MCF 10A (cell line): ENCODE measurements at regions of chr9 and their contacts with region 1.

Region 1: DNA sequence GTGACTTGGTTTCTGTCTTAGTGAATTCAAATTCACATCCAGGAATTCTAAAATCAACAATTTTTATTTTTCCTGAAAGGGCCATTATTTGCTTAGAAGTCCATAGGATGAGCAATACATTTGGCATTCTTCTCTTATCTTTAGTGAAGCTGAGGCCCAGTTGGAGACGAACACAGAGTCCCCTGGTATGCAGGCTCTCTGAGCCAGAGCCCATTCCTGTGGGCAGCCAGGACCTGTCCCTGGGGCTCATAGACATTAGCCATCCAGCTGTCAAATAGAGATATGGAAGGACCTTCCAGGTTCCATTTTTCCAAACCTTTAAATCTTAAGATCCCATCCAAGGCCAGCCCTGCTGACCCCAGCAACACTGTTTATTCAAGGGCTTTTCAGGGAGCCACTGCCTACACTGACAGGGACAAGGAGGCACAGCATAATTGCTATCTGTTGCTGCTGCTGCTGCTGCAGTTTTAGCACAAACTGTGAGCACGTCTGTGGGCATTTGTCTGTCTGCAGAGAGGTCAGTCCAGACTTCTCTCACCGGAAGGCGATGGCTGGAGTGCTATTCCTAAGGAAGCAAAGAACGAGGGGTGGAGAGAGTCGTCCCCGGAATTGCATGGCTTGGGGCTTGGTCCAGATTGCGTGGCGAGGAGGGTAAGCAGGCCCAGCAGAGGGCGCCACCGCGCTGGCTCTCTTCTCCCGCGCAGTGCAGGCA is 639.0 kb downstream of the CCDC171 start:
- DNase-seq: peak; percentile 74
- H3K4me3 Mint-ChIP-seq: peak overlapping the region; percentile 53
- H3K27ac Mint-ChIP-seq: no peak overlapping the region
- H3K4me1 Mint-ChIP-seq: peaks cover 13% of the 10 kb centered on the region
- H3K27me3 Mint-ChIP-seq: no peaks in the 10 kb centered on the region
- CTCF ChIP-seq: peak; percentile 60

Region 2: GRCh38 chr9:15873569-15874177 is 318.2 kb before region 1 on chr9:
- CTCF ChIA-PET with region 1: no interaction called
- POLR2A ChIA-PET with region 1: no interaction called
- intact Hi-C with region 1: loop called (anchors 5 kb)
- DNase-seq: peak; percentile 67
- H3K4me3 Mint-ChIP-seq: no peak overlapping the region
- H3K27ac Mint-ChIP-seq: no peak overlapping the region
- H3K4me1 Mint-ChIP-seq: peaks cover 9% of the 10 kb centered on the region
- H3K27me3 Mint-ChIP-seq: no peaks in the 10 kb centered on the region
- CTCF ChIP-seq: peak; percentile 51

Region 3: DNA sequence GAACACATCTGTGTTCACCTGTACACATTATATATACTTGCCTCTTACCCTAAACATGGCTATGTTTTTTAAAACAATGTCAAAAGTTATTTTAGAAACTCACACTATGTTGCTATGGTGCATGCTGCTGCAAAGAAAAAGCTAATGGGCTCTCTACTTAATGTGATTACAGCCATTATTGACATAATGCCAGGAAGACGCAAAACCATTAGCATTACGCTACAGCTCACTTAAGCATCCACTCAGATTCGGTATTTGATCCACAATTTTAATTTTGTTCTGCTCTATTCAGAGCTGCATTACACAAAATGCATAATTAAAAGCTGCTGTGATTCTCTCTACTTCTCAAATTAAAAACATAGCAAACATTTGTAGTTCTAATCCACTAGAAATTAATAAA is 283.4 kb after region 1 on chr9:
- CTCF ChIA-PET with region 1: no interaction called
- POLR2A ChIA-PET with region 1: no interaction called
- intact Hi-C with region 1: loop called (anchors 10 kb)
- DNase-seq: no peak
- H3K4me3 Mint-ChIP-seq: no peak overlapping the region
- H3K27ac Mint-ChIP-seq: no peak overlapping the region
- H3K4me1 Mint-ChIP-seq: no peaks in the 10 kb centered on the region
- H3K27me3 Mint-ChIP-seq: no peaks in the 10 kb centered on the region
- CTCF ChIP-seq: no peak

Region 4: GRCh38 chr9:16601991-16602390 is 410.1 kb after region 1 on chr9:
- CTCF ChIA-PET with region 1: no interaction called
- POLR2A ChIA-PET with region 1: no interaction called
- intact Hi-C with region 1: loop called (anchors 1 kb)
- DNase-seq: peak; percentile 5
- H3K4me3 Mint-ChIP-seq: no peak overlapping the region
- H3K27ac Mint-ChIP-seq: no peak overlapping the region
- H3K4me1 Mint-ChIP-seq: no peaks in the 10 kb centered on the region
- H3K27me3 Mint-ChIP-seq: no peaks in the 10 kb centered on the region
- CTCF ChIP-seq: peak; percentile 12

Region 5: DNA sequence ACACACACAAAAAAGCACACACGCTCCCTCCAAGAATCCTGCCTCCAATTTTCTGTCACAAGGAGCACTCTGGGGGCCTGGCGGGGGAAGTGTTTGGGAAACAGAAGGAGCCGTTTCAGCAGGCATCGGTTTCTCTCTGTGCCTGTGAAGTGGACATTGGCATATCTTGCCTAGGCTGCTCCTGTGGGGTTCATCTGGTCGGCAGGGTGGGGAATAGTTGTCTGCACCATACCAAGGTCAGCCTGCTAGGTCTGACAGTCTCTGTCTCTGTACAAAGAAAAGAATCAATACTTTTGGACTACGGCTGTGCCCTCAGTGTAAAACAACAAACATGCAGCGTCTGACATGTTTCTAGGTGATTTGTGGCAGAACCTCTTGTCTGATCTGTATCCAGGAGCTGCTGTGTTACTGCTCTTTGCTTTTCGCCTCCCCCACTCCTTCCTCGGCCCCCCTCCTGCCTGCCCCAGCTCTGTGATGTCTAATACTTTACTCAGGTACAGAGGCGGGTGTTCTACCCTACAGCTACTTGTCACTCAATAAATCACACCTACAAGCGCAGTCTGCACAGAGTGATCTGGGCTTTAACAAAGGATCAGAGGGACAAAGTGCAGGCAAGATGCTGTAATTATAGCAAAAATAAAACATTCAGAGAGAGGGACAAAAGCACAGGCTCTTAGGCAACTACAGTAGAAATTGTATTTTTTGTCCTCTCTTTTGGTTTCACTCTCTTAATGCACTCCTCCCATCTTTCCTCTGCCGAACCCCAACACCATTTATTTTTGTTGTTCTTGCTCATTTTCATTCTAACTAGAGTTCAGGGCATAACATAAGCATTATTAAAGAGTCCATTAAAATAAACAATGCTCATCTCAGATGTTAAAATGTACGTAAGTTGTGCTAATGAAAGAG is 461.9 kb after region 1 on chr9:
- CTCF ChIA-PET with region 1: interaction called, 5 read pairs
- POLR2A ChIA-PET with region 1: no interaction called
- intact Hi-C with region 1: loop called (anchors 1 kb)
- DNase-seq: no peak
- H3K4me3 Mint-ChIP-seq: no peak overlapping the region
- H3K27ac Mint-ChIP-seq: no peak overlapping the region
- H3K4me1 Mint-ChIP-seq: peaks cover 6% of the 10 kb centered on the region
- H3K27me3 Mint-ChIP-seq: peaks cover 23% of the 10 kb centered on the region
- CTCF ChIP-seq: no peak

Region 6: DNA sequence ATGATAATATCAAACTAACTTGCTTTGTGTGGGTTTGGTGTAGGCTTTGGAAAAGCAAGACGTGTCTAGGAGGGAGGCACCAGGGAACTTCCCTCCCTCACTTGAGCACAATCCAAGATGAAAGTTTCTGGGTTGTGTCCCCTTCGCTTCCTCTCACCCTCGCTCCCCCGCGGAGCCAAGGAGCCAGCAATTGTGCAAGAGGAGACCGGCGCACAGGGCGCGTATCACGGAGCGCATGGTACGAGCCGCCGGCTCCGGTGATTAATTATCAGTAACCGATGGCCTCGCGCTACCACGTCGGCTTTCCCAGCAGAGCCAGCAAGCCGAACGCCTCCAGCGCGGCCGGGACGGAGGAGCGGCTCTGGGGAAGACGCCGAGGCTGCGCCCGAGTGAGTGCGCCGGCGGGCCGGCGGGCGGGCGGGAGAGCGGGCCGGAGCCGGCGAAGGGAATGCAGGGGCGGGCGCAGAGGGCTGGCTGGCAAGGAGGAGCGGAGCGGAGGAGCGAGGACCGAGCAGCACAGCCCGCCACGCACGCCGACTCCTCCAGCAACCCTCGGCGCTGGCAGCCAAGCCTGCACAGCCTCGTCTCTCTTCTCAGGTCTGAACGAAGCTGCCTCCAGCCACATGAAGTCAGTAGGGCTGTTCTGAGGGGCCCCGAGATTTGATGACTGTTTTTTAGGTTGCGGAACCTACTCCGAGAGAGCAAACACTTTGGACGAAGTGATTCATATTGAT is 535.0 kb after region 1 on chr9:
- CTCF ChIA-PET with region 1: interaction called, 3 read pairs
- POLR2A ChIA-PET with region 1: no interaction called
- intact Hi-C with region 1: loop called (anchors 5 kb)
- DNase-seq: peak; percentile 85
- H3K4me3 Mint-ChIP-seq: peak overlapping the region; percentile 78
- H3K27ac Mint-ChIP-seq: no peak overlapping the region
- H3K4me1 Mint-ChIP-seq: peaks cover 5% of the 10 kb centered on the region
- H3K27me3 Mint-ChIP-seq: peaks cover 21% of the 10 kb centered on the region
- CTCF ChIP-seq: no peak

Region 7: DNA sequence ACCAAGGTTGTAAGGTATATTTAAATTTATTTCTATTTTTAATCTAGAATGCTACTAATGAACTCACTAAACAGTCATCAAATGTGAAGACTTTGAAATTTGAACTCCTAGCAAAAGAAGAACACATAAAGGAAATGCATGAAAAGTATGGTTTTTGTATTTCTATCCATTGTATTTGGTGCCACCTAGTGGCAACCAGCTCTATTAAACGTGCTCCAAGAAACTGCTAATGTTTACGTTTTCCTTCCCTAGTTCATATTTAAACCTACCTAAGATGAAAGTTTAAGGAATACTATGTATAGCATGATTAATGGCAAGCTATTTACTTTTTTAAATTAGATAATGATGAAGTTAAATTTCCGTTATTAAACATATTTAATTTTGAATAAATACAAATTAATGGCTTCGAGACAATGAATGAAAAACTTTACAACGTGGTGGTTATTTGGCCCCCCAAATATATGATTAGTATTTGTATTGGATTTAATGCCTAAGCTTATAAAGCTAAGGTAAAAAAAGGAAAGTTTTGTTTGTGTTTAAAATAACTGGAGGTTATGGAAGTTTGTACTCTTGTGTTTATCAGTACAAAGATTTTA is 1271.1 kb after region 1 on chr9:
- CTCF ChIA-PET with region 1: interaction called, 4 read pairs
- POLR2A ChIA-PET with region 1: no interaction called
- intact Hi-C with region 1: loop called (anchors 1 kb)
- DNase-seq: peak; percentile 63
- H3K4me3 Mint-ChIP-seq: no peak overlapping the region
- H3K27ac Mint-ChIP-seq: no peak overlapping the region
- H3K4me1 Mint-ChIP-seq: no peaks in the 10 kb centered on the region
- H3K27me3 Mint-ChIP-seq: no peaks in the 10 kb centered on the region
- CTCF ChIP-seq: peak; percentile 55